A673 (cell line): ENCODE measurements at regions of chr1 and their contacts with region 1.

Region 1: DNA sequence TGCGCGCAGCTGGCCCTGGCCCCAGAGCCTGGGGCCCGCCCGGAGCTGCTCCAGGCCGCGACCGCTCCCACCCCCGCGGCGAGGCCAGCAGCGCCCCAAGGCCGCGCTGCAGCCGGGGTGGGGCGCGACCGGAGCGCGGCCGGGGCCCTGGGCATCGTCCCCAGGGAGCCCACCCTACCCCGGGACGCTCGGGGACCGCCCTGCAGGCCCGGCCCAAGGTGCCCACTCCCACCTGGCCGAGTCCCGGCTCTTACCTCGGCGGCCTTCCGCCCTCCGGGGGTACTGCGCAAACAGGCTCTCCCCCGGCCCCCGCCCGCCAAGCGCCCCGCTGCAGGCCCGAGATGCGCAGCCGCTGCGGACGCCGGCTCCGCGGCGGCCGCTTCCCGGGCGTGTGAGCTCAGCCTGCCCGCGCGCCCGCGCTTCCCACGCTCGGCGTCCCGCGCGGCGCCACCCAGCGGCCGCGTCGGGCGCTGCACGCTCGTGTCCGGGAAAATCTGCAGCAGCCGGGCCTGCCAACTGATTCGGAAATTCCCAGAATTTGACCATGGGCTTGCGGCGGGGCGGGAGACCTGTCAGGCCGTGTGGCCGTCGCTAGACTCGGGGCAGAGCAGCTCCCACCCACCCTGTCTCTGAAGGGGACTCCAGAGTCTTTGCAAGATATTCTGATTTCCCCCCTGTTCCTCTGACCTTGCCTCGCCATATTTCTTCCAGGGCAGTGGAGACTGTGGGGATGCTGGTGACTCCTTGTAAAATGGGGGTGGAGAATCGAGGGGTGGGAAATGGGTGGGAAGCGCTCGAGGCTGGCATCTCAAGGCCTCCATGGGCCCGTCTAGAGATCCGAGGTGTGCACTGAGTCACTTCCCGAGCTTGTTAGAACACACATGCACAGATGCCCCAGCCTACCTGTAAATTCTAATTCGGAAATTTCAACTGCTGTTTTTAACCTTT is 41.9 kb downstream of the CD34 start:
- DNase-seq: peak; percentile 77
- H3K4me3 ChIP-seq: peak overlapping the region; percentile 63
- H3K27ac ChIP-seq: no peak overlapping the region
- H3K4me1 ChIP-seq: no peaks in the 10 kb centered on the region
- H3K27me3 ChIP-seq: no peaks in the 10 kb centered on the region
- CTCF ChIP-seq: peak; percentile 59

Region 2: GRCh38 chr1:207745285-207745684 is 123.8 kb before region 1 on chr1:
- CTCF ChIA-PET with region 1: no interaction called
- POLR2A ChIA-PET with region 1: no interaction called
- intact Hi-C with region 1: no loop called
- DNase-seq: no peak
- H3K4me3 ChIP-seq: no peak overlapping the region
- H3K27ac ChIP-seq: no peak overlapping the region
- H3K4me1 ChIP-seq: peaks cover 20% of the 10 kb centered on the region
- H3K27me3 ChIP-seq: no peaks in the 10 kb centered on the region
- CTCF ChIP-seq: no peak

Region 3: GRCh38 chr1:207828485-207829158 is 40.4 kb before region 1 on chr1:
- CTCF ChIA-PET with region 1: interaction called, 4 read pairs
- POLR2A ChIA-PET with region 1: no interaction called
- intact Hi-C with region 1: loop called (anchors 5 kb)
- DNase-seq: peak; percentile 78
- H3K4me3 ChIP-seq: no peak overlapping the region
- H3K27ac ChIP-seq: no peak overlapping the region
- H3K4me1 ChIP-seq: no peaks in the 10 kb centered on the region
- H3K27me3 ChIP-seq: no peaks in the 10 kb centered on the region
- CTCF ChIP-seq: peak; percentile 67

Region 4: GRCh38 chr1:207853372-207853757 is 15.7 kb before region 1 on chr1:
- CTCF ChIA-PET with region 1: no interaction called
- POLR2A ChIA-PET with region 1: no interaction called
- intact Hi-C with region 1: no loop called
- DNase-seq: no peak
- H3K4me3 ChIP-seq: no peak overlapping the region
- H3K27ac ChIP-seq: no peak overlapping the region
- H3K4me1 ChIP-seq: no peaks in the 10 kb centered on the region
- H3K27me3 ChIP-seq: peaks cover 6% of the 10 kb centered on the region
- CTCF ChIP-seq: no peak

Region 5: DNA sequence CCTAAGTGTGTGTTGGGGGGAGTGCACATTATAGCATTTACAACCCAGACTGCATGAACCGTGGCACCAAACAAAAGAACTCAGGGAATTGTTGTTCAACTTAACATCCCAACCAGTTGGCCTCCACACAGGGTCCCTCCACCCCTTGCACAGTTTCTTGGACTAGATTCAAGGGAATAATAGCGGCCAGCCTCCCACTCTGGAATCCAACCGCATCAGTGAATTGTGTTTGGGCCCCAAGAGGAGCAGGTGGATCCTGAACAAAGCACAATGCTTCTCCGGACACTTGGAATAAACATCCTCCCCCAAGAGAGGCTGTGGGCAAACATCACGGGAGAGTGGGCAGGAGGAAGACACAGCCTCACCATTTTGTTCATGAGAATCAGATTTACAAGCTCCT is 23.7 kb after region 1 on chr1:
- CTCF ChIA-PET with region 1: no interaction called
- POLR2A ChIA-PET with region 1: no interaction called
- intact Hi-C with region 1: no loop called
- DNase-seq: no peak
- H3K4me3 ChIP-seq: no peak overlapping the region
- H3K27ac ChIP-seq: no peak overlapping the region
- H3K4me1 ChIP-seq: no peaks in the 10 kb centered on the region
- H3K27me3 ChIP-seq: peaks cover 2% of the 10 kb centered on the region
- CTCF ChIP-seq: no peak